ENCODE measurements at regions of chr10 and their contacts with region 1.

Region 1: GRCh38 chr10:89793649-89794254 is 92.4 kb downstream of the KIF20B start:
- DNase-seq: no peak
- ATAC-seq: peak; percentile 72

Region 2: GRCh38 chr10:90787393-90788198 is 993.8 kb after region 1 on chr10:
- intact Hi-C with region 1: loop called (anchors 5 kb)
- DNase-seq: no peak
- ATAC-seq: no peak

Region 3: GRCh38 chr10:90857635-90858460 is 1064.1 kb after region 1 on chr10 and contains the start of gene HTR7:
- intact Hi-C with region 1: loop called (anchors 2 kb)
- DNase-seq: peak; percentile 79
- ATAC-seq: peak; percentile 92
- total RNA-seq, gene HTR7: not detected